Activated T-helper 1 cell treated with anti-CD3 and anti-CD28 coated beads, Interleukin-12 subunit alpha, Interleukin-12 subunit beta, Interleukin-2, Interleukin-4 antibody, amounts not matched to agents 30 ng/mL and 10 ng/mL and 1 ng/mL, durations not matched to agents 14 hours and 24 hours and 36 hours (primary cell): ENCODE measurements at regions of chr10 and their contacts with region 1.

Region 1: GRCh38 chr10:74081192-74081803 is 69.3 kb downstream of the AP3M1 start:
- DNase-seq: peak; percentile 12
- H3K4me3 Mint-ChIP-seq: no peak overlapping the region
- H3K27ac Mint-ChIP-seq: peak overlapping the region; percentile 0
- H3K4me1 Mint-ChIP-seq: peaks cover 48% of the 10 kb centered on the region
- H3K27me3 Mint-ChIP-seq: no peaks in the 10 kb centered on the region

Region 2: DNA sequence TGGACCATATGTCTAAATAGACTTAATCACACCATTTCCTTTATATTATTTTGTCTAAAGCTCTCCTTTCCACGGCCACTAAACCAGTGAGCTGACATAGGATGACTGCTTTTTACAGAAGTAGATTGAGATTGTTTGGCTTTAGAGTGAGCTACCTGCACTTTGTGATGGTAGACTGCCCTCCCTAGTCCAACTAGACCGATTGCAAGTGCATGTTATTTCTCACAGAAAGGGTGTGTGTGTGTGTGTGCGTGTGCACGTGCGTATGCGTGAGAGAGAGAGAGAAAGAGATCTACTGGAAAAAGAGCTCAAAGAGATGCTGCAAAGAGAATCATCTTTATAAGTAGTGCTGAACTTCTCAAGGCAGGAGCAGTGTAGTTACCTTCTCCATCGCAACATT is 22.6 kb before region 1 on chr10:
- intact Hi-C with region 1: loop called (anchors 1 kb)
- DNase-seq: no peak
- H3K4me3 Mint-ChIP-seq: no peak overlapping the region
- H3K27ac Mint-ChIP-seq: peak overlapping the region; percentile 18
- H3K4me1 Mint-ChIP-seq: peaks cover 45% of the 10 kb centered on the region
- H3K27me3 Mint-ChIP-seq: peaks cover 4% of the 10 kb centered on the region